Endothelial cell of umbilical vein (primary cell): ENCODE measurements at regions of chr17 and their contacts with region 1.

Region 1: DNA sequence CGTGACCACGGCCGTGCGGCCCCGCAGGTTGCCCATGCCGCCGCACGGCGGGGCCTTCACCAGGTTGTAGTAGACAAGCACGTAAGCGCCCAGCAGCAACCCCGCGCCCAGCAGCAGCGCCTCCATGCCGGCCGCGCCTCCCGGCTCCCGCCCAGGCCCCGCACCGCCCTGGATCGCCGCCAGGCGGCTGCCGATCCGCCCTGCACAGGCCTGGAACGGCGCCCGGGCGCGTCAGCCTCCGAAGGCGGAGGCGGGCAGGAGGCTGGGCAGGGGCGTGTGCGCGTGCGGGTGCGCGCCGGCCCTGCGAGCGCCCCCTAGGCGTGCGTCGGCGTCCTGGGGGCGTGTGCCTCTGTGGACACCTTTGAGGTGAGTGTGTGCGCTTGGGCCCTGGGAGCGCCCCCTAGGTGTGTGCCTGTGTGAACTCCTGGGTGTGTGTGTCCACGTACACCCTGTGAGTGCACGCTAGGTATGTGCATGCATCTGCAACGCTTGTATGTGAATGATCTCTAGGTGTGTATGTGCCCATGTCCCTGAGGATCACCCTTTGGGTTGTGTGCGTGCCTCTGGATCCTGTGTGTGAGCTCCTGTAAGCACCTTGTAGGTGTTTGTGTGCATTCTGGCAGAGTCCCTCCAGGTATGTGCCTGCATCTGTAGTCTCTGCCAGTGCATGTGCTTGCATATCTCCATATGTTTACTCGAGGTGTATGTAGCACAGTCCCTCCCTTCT is at the start of gene DHRS13:
- DNase-seq: peak; percentile 93
- H3K4me3 ChIP-seq: peak within 1 kb of the TSS; percentile 45 to 67 (median 59)
- H3K27ac ChIP-seq: peak within 1 kb of the TSS; percentile 15
- H3K4me1 ChIP-seq: peaks cover 13% of the 10 kb centered on the region
- H3K27me3 ChIP-seq: no peaks in the 10 kb centered on the region
- CTCF ChIP-seq: peak; percentile 87 to 99
- POLR2A ChIP-seq: no peak
- total RNA-seq, gene DHRS13: 5.6 and 7.2 TPM in 2 replicates

Region 2: DNA sequence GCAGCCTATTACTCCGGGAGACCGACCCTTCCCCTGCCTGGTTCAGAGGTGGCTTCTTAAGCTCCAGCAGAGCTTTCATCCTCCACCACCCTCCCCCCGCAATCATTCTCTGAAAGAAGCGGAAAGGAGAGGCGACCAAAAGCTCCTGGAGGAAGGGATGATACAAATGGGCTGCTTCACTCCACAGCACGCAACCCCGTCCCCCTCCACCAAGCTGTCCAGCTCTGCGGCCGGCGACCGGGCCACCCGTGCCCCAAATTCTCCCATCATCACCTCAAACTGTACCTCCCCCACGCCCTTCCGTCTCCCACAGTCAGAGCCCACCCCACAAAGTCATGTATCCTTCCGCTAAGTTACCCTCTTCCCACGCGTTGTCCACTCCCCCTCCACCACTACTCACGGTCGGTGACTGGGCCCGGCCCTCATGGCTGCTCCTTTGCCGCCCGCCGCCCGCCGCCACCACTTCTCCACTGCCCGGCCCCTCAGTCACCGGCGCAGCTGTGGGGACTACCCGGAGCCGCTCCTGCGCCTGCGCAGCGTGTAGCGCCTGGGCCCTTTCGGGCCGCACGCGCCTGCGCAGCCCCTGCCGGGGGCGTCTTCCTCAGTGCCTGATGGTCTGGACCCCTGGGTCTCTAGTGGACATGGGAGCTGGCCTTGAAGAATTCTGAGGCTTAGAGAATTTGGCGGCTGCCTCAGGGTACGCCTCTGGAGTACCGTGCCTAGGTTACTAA is 60.5 kb before region 1 on chr17 and contains the start of gene FAM222B:
- CTCF ChIA-PET with region 1: interaction called, 10 read pairs
- POLR2A ChIA-PET with region 1: no interaction called
- dilution Hi-C with region 1: no loop called
- intact Hi-C with region 1: no loop called
- DNase-seq: peak; percentile 87
- H3K4me3 ChIP-seq: peak within 1 kb of the TSS; percentile 38 to 70 (median 65)
- H3K27ac ChIP-seq: peak within 1 kb of the TSS; percentile 54
- H3K4me1 ChIP-seq: peaks cover 19% of the 10 kb centered on the region
- H3K27me3 ChIP-seq: no peaks in the 10 kb centered on the region
- CTCF ChIP-seq: no peak
- POLR2A ChIP-seq: peak; percentile 72
- total RNA-seq, gene FAM222B: 30.6 and 33.7 TPM in 2 replicates

Region 3: DNA sequence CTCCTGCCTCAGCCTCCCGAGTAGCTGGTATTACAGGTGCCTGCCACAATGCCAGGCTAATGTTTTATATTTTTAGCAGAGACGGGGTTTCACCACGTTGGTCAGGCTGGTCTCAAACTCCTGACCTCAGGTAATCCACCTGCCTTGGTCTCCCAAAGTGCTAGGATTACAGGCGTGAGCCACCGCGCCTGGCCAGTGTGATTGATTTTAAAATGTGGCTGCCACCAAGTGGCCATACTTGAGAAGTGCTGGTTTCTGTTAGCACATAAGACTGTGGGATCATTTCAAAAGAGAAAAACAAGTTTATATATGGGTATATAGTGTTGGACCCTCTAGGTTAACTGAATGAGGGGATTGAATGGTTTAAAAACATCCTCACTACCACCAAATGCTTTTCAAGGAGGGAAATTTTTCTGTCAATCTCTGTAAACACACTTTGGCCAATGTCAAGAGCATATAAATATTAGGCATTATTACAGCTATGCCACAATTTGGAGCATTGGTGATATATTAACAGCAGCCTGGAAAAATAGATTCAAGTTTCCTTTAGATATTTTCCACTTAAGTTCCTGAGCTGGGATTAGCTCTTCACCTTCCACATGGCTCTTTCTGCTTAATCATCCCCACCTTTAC is 13.4 kb after region 1 on chr17:
- CTCF ChIA-PET with region 1: interaction called, 11 read pairs
- POLR2A ChIA-PET with region 1: no interaction called
- dilution Hi-C with region 1: no loop called
- intact Hi-C with region 1: no loop called
- DNase-seq: peak; percentile 50
- H3K4me3 ChIP-seq: no peak overlapping the region
- H3K27ac ChIP-seq: no peak overlapping the region
- H3K4me1 ChIP-seq: peaks cover 13% of the 10 kb centered on the region
- H3K27me3 ChIP-seq: no peaks in the 10 kb centered on the region
- CTCF ChIP-seq: peak; percentile 46
- POLR2A ChIP-seq: no peak